Keratinocyte (primary cell): ENCODE measurements at regions of chr5 and their contacts with region 1.

Region 1: DNA sequence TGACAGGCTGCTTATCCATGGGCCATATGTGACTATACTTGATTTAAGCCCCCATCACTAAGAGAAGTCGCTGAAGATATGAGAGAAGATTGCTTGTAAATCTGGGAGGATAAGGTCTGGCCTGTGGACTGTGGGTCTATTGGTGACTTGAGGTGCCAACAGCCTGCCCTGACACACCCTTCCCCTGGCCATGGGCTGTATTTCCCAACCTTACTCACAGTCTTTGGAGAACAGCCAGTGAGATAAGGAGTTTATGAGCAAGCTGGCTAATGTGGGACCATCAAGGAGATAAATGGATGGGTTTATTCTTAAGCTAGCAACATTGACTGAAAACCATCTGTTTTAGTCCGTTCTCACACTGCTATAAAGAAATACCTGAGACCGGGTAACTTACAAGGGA is 231.3 kb downstream of the ZSWIM6 start:
- DNase-seq: no peak
- H3K4me3 ChIP-seq: no peak overlapping the region
- H3K27ac ChIP-seq: no peak overlapping the region
- H3K4me1 ChIP-seq: no peaks in the 10 kb centered on the region
- H3K27me3 ChIP-seq: no peaks in the 10 kb centered on the region
- CTCF ChIP-seq: no peak

Region 2: GRCh38 chr5:61509324-61509723 is 54.1 kb before region 1 on chr5:
- dilution Hi-C with region 1: no loop called
- DNase-seq: no peak
- H3K4me3 ChIP-seq: no peak overlapping the region
- H3K27ac ChIP-seq: no peak overlapping the region
- H3K4me1 ChIP-seq: no peaks in the 10 kb centered on the region
- H3K27me3 ChIP-seq: no peaks in the 10 kb centered on the region
- CTCF ChIP-seq: no peak

Region 3: DNA sequence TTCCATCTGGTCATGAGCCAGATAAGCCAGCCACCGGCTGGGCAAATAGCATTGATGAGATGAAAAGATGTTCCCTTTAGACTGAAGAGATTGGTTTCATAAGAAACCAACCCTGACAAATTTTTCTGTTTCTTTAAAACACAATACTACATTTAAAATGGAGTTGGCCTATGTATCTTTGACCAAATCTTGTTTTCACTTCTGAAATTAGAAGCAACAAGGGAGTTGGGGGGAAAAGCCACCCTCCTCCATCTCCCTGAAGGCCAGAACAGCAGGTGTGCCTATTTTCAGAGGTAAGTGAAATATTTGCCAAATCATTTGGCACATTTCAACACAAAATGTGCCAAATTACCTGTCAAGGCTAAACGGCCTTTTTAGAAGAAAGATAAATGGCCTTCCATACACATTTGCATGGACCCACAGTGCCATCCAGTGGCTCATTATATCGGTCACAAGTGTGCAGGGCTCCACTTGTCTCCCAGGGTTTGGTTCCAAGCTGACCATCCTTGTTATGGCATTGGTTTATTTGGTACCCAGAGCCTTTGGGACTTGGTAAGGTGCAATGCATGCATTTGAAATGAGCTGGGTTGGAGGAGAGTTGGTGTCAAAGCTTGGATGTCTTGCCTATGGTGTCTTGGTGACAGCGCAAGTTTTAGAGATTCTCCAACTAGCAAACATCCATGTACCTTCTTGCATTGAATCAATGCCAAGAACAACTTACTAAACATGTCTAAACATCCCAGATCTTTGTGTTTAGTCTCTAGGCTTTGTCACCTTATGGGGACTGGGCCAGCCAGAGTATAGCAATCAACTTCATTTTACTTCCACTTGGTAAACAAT is 370.6 kb after region 1 on chr5:
- dilution Hi-C with region 1: loop called (anchors 25 kb)
- DNase-seq: no peak
- H3K4me3 ChIP-seq: no peak overlapping the region
- H3K27ac ChIP-seq: no peak overlapping the region
- H3K4me1 ChIP-seq: peaks cover 7% of the 10 kb centered on the region
- H3K27me3 ChIP-seq: no peaks in the 10 kb centered on the region
- CTCF ChIP-seq: peak; percentile 74 to 94 (median 87)